ENCODE measurements at regions of chr12 and their contacts with region 1.

Region 1: DNA sequence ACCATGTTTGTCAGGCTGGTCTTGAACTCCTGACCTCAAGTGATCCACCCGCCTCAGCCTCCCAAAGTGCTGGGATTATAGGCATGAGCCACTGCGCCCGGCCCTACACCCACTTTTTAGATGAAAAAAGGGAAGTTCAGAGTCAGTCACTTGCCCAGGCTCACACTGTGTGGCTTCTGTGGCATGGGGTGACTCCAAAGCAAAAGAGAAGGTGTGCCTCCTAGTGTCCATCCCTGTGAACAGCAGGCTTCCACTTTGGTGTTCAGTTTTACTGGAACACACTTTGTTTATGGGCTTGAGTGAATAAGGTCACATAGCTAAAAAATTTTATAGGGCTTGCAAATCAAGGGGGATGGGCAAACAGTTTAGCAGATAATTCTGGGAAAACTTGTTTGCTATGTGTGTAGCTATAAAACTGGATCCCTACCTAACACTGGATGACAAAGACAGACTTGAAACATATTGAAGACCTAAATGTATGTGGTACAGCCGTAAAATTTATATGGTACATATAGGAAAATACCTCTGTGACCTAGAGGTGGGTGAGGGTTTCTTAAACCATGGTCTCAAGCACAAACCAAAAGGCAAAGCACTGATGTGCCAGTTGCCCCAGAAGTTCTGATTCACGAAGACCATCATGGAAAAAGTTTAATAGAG is 54.9 kb downstream of the EID3 start:
- DNase-seq: peak; percentile 84
- H3K4me3 ChIP-seq: no peak overlapping the region
- H3K27ac ChIP-seq: no peak overlapping the region
- H3K4me1 ChIP-seq: no peaks in the 10 kb centered on the region
- CTCF ChIP-seq: peak; percentile 88

Region 2: DNA sequence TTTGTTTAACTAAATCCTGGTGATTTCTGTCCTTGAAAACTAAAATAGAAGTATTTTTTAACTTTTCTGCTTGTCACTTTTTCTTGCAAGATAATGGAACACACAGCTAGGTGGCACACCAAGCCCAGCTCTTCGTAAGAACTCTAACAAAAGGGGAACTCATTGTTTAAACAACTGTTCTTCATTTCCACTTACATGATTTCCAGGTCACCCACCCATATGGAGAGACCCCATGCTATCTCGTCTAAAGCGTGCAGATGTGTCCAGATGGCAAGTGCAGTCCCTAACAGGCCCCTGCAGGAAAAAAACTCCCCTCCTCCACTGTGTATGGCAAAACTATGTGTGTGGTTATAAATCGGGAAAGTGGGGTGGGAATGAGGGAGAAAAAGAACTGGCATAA is 474.2 kb before region 1 on chr12:
- CTCF ChIA-PET with region 1: no interaction called
- POLR2A ChIA-PET with region 1: no interaction called
- intact Hi-C with region 1: loop called (anchors 10 kb)
- DNase-seq: peak; percentile 61
- H3K4me3 ChIP-seq: no peak overlapping the region
- H3K27ac ChIP-seq: no peak overlapping the region
- H3K4me1 ChIP-seq: peaks cover 13% of the 10 kb centered on the region
- CTCF ChIP-seq: peak; percentile 80

Region 3: DNA sequence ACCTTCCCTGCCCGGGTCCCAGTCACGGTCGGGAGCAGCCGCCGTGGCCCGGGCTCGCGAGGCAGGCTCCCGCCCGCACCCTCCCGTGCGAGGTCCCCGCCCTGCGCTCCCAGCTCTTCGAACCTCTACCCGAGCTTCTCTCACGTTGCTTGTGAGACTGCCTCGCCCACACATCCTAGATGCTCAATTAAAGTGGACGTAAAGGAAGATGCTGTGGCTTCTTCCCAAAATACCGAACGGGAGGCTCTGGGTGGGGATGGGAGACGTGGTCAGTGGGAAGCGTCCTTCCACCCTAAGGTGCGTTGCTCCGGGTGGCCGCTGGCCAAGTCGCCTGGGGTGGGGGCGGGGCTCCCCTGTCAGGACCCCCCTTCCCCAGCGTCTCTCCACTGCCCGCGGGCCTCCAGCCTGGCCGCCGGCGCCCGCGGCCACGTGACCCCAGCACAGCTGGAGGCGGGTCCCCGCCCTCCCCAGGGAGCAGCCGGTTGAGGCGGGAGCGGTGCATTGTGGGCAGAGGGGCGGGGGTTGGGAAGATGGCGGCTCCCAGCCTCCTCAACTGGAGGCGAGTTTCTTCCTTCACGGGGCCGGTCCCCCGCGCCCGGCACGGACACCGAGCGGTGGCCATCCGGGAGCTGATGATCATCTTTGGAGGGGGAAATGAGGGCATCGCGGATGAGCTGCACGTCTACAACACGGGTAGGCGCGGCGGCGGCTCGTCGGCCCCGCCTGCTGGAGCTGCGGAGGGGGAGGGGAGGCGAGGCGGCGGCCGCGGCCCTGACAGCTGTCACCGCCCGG is 294.2 kb before region 1 on chr12 and contains the start of gene HCFC2:
- CTCF ChIA-PET with region 1: no interaction called
- POLR2A ChIA-PET with region 1: interaction called, 3 read pairs
- intact Hi-C with region 1: loop called (anchors 10 kb)
- DNase-seq: peak; percentile 91
- H3K4me3 ChIP-seq: peak within 1 kb of the TSS; percentile 97
- H3K27ac ChIP-seq: peak within 1 kb of the TSS; percentile 28
- H3K4me1 ChIP-seq: peaks cover 16% of the 10 kb centered on the region
- CTCF ChIP-seq: no peak
- total RNA-seq, gene HCFC2: 8.7 and 14.6 TPM in 2 replicates

Region 4: DNA sequence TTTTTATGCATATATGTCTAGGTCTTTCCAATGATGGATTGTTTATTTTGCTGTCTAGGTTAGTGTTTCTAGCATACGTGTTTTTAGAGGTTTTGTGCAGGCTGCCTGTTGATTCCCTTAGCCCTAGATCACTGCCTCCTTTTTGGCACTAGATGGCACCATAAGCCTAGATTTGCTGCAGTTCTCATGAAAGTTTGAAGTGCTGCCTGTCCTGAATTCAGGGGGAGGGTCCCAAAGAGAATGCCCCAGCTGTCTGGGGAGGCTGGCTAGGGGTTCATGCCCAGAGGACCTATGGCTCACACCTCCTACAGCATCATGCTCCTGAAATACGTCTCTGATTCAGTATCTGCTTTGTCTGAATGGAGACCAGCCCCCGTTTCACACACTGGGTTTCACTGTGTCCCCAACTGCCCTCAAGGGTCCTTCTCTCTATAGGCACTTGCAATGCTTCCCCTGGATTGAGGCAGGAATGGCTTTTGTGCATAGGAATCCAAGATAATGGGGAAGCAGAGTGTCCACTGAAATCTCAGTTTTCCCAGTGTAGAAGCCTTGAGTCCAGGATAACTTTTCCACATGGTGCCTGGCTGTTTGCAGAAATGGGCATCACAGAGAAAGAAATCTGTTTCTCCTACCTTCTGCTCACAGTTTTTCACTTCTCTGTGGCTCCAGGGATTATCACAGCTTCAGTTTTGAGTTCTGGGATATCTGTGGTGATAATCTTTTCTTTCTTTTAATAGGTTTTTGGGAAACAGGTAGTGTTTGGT is 157.1 kb before region 1 on chr12:
- CTCF ChIA-PET with region 1: no interaction called
- POLR2A ChIA-PET with region 1: no interaction called
- intact Hi-C with region 1: loop called (anchors 1 kb)
- DNase-seq: peak; percentile 71
- H3K4me3 ChIP-seq: no peak overlapping the region
- H3K27ac ChIP-seq: no peak overlapping the region
- H3K4me1 ChIP-seq: no peaks in the 10 kb centered on the region
- CTCF ChIP-seq: peak; percentile 95

Region 5: GRCh38 chr12:104329707-104330532 is 28.6 kb before region 1 on chr12:
- CTCF ChIA-PET with region 1: no interaction called
- POLR2A ChIA-PET with region 1: no interaction called
- intact Hi-C with region 1: no loop called
- DNase-seq: no peak
- H3K4me3 ChIP-seq: no peak overlapping the region
- H3K27ac ChIP-seq: no peak overlapping the region
- H3K4me1 ChIP-seq: no peaks in the 10 kb centered on the region
- CTCF ChIP-seq: no peak

Measured in OCI-LY7 (cell line).